Psoas muscle (tissue), 8 donors: ENCODE measurements at regions of chr9 and their contacts with region 1.

Region 1: DNA sequence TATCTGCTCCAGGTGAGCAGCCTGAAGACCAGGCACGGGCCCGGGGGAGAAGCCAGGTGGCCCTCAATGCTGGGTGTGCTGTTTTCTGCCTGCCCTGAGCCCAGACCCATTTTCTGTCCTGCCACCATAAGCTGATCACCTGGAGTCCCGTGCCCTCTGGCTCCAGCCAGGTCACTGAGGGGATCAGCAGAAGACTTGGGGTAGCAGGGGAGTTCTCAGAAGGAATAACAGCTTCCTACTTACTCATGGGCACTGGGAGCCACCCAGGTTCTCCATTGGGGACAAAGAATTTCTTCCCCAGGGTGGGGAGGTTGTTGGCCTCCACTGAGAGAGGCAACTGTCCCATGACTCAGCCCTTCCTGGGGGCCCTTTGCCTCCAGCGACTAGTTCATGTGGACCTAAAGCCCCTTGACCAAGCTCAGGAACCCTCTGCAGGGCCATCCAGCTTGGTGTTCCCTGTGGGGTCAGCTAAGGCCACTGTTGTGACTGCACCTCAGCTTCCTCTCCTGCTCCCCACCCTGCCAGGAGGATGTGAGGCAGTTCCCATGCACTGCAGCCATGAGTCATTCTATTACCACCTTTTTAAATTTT is 175.1 kb downstream of the AUH start:
- DNase-seq: no peak
- ATAC-seq: peak in 1 of 4 donors; percentile 48
- H3K4me3 ChIP-seq: no peak overlapping the region
- H3K27ac ChIP-seq: no peak overlapping the region
- H3K4me1 ChIP-seq: peaks cover 1% of the 10 kb centered on the region
- H3K27me3 ChIP-seq: no peaks in the 10 kb centered on the region
- CTCF ChIP-seq: no peak

Region 2: GRCh38 chr9:91131433-91131839 is 55.2 kb before region 1 on chr9:
- intact Hi-C with region 1: loop called in 1 of 2 experiments (anchors 5 kb)
- DNase-seq: peak; percentile 31 to 59
- ATAC-seq: peak in 1 of 4 donors; percentile 43
- H3K4me3 ChIP-seq: no peak overlapping the region
- H3K27ac ChIP-seq: no peak overlapping the region
- H3K4me1 ChIP-seq: no peaks in the 10 kb centered on the region
- H3K27me3 ChIP-seq: no peaks in the 10 kb centered on the region
- CTCF ChIP-seq: no peak